ENCODE measurements at regions of chr5 and their contacts with region 1.

Region 1: DNA sequence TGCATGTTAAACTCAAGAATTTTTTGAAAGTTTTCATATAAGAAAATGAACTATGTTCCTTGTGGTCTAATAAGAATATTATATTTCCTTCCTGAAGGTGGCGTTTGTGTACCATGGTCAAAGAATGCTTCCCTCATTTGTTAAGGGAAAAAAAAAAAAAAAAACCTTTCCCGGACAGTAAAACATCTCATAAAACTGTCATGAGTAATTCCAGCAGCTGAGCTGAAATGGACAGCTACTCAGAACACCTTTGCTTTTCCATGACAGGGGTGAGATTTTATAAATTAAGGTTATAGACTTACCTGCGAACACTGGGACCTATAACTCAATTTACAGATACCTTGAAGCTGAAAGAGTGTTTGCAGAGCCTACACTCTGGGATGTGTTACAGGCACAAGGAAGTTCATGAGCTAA is 113.2 kb upstream of the RANBP3L start:
- DNase-seq: peak in 3 of 42 donors; percentile 13 to 38 (median 17)

Region 2: DNA sequence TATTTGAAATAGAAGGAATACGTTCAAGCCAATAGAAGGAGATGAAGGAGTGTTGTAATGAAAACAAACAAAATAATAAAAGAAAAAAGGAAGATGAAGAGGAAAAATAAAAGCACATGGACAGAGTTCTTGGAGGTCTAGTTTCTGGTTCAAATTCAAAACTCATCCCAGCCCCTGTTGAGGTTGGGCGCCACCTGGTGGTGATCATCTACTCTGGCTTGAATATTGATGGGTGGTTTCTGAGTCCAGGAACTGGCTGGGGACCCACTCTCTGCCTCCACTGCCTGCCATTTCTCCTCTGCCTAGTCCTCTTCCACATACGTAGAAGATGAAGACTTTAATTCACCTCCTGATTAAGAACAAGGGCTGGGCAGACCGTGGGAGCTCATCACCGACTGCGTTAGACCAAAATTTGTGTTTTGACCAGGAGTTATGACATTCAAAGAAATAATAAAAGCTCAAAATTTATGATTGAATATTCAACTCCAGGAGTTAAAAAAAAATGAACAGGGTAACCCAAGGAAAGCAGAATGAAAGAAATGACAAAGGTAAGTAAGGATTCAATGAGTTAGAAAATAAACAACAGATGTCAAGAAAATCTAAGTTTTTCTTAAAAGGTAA is 92.6 kb after region 1 on chr5:
- intact Hi-C with region 1: loop called (anchors 10 kb)
- DNase-seq: peak; percentile 40 to 95 (median 81)

Measured in head of caudate nucleus (tissue), 42 donors.